Mammary epithelial cell (primary cell): ENCODE measurements at regions of chr1 and their contacts with region 1.

Region 1: DNA sequence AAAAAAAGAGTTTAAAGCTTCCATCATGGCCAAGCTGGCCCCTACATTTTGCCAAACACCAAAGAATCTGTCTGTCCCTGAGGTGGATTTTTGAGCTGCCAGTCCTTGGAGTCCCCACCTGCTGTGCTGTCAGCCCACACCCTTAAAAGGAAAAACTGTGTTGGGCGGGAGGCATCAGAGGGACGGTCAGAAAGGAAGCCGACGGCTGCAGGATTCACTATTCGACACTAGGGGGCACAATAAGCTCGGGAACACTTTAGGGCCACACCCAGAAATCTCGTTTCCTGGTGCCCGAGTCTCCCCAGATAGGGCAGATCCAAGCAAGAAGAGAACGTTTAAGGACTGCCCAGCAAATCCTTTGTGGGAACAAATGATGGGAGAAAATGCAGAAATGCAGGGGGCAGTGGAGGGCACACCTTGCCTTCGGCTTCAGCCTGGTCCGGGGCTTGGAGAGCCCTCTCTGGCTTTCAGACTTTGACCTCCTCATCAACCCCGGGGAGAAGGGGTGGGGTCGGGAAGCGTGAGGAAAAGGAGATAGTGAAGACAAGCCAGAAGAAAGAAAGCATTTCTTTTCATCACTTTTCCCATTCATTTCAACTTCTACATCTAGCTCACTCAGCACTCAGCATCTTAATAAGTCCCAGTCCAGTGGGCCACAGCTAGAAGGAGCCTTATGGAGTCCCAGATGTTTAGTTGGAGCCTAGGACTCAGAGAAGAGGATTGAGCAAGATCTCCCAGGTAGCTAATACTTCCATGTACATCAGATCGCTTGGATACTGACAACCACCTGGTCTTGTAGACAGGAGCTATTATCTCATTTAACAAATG is 5.0 kb upstream of the CTTNBP2NL start:
- DNase-seq: peak; percentile 88
- H3K4me3 ChIP-seq: peak overlapping the region; percentile 38 to 50 (median 41)
- H3K27ac ChIP-seq: peak overlapping the region; percentile 52
- H3K4me1 ChIP-seq: peaks cover 39% of the 10 kb centered on the region
- H3K27me3 ChIP-seq: no peaks in the 10 kb centered on the region
- CTCF ChIP-seq: peak; percentile 90 to 93

Region 2: DNA sequence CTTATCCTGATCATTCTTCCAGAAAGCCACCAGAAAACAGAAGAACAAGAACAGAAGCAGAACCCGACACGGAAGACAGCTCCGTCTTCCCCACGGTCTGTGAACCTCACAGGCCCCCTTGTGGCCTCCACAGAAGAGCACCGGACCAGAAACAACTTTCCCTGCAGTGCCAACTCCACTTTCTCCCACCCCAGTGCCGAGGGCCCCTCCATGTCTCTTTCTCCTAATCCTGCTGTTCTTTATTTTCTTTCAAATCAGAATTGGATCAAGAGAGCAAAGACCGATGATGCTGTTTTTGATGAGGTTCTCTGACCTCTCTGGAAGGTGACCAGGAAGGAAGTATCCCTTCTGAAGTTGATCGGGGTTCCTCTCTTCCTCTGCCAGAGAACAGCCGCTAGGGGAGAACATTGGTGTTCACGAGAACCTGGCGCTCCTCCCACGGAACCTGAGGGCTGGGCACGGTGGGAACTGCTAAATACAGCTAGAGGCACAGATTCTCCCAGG is 53.9 kb before region 1 on chr1:
- CTCF ChIA-PET with region 1: interaction called, 15 read pairs
- dilution Hi-C with region 1: no loop called
- in situ Hi-C with region 1: no loop called
- intact Hi-C with region 1: no loop called
- DNase-seq: peak; percentile 53
- H3K4me3 ChIP-seq: no peak overlapping the region
- H3K27ac ChIP-seq: no peak overlapping the region
- H3K4me1 ChIP-seq: peaks cover 44% of the 10 kb centered on the region
- H3K27me3 ChIP-seq: no peaks in the 10 kb centered on the region
- CTCF ChIP-seq: peak; percentile 51 to 86

Region 3: DNA sequence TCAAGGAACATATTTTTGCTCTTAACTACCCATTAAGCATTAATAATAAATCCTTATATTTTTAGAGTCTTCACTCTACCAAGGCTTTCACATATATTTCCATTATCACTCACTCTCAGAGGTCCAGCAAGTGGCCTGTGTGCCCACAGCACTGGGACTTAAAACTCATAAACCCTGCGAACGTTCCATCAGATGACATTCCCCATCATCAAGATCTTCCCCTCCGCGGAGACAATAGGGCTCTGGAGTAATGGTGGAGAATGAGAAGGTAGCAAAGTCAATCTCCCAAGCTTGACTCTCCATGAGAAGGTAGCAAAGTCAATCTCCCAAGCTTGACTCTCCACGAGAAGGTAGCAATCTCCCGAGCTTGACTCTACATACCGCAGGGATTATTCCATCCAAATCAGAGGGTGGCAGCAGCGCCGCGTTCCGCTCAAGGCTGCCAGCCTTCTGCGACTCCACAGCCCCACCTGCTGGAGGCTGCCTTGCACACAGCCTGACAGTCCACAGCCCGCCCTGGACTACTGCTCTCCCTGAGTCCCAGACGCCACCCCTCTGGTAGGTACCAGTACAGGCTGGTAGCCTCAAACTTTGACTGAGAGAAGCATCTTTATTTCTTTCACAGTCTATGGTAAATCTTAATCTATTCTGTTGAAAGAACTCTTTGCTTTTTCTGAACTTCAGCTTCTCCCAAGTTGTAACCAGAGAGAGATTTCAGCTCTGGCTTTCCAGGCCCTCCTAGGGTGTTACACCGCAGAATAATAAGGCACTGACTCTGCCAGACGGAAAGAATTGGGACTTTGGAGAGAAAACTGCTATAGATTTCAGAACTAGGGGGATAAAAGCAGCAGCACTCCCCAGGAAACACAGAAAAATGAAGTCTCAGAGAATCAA is 21.4 kb before region 1 on chr1:
- CTCF ChIA-PET with region 1: interaction called, 10 read pairs
- dilution Hi-C with region 1: no loop called
- in situ Hi-C with region 1: no loop called
- intact Hi-C with region 1: no loop called
- DNase-seq: peak; percentile 73
- H3K4me3 ChIP-seq: no peak overlapping the region
- H3K27ac ChIP-seq: no peak overlapping the region
- H3K4me1 ChIP-seq: no peaks in the 10 kb centered on the region
- H3K27me3 ChIP-seq: no peaks in the 10 kb centered on the region
- CTCF ChIP-seq: peak; percentile 97 to 99

Region 4: DNA sequence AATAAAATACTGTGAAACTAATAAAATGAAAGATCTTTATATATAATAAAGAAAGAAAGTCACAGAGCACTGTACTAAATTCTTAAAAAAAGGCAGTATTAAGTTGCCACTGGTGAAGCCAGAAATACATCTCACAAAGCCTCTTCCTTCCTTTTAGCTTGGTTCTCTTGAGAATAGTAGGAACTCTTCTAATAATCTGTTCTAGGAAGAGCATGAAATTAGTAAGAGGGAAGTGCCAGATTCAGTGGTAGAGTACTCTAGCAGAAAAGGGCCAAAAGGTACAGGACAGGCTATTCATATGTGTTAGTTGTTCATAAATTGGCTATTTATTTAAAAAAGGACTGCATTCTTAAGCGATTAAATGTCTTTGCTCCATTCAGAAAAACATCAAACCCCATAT is 38.8 kb after region 1 on chr1:
- CTCF ChIA-PET with region 1: no interaction called
- dilution Hi-C with region 1: no loop called
- in situ Hi-C with region 1: no loop called
- intact Hi-C with region 1: no loop called
- DNase-seq: no peak
- H3K4me3 ChIP-seq: no peak overlapping the region
- H3K27ac ChIP-seq: no peak overlapping the region
- H3K4me1 ChIP-seq: no peaks in the 10 kb centered on the region
- H3K27me3 ChIP-seq: no peaks in the 10 kb centered on the region
- CTCF ChIP-seq: no peak

Region 5: GRCh38 chr1:112501810-112502641 is 111.0 kb after region 1 on chr1:
- CTCF ChIA-PET with region 1: no interaction called
- dilution Hi-C with region 1: no loop called
- in situ Hi-C with region 1: no loop called
- intact Hi-C with region 1: loop called (anchors 2 kb)
- DNase-seq: peak; percentile 69
- H3K4me3 ChIP-seq: peak overlapping the region; percentile 54 to 57 (median 56)
- H3K27ac ChIP-seq: no peak overlapping the region
- H3K4me1 ChIP-seq: peaks cover 5% of the 10 kb centered on the region
- H3K27me3 ChIP-seq: no peaks in the 10 kb centered on the region
- CTCF ChIP-seq: peak; percentile 33 to 87

Region 6: DNA sequence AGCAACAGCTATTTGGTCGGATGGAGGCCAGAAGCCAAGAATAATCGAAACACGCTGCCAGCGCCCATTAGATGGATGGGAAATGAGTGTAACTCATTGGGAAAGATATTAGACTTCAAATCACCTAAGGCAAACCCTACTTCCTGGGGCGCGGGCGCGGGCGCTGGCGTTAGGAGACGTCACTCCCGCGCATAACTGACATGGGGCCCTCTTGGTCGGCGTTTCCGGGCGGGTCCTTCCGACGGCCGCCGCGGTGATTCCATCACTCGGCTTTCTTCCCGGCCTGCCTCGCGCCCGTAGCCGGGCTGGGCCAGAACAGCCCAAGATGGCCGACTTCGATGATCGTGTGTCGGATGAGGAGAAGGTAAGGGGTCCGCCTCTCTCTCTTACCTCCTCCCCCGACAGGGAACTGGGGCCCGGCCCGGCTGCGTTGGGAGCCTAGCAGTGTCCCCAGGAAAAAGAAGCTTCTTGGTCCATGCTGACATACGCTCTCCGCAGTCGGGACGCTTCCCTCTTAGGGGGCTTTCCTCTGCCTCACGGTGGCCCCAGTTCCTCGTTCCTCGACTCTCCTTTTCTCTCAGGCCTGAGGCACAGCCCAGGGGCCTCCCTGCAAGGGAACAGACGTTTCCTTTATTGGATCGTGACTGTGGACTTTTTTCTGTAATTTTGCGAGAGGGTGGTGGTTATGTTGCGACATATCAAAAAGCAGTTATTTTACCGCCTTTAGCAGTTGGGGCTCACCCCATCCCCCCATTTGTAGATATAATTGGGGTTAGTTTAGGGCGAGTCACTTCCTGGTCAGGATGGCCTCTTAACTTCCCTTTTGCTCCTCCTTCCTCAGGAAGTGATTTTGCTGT is 228.8 kb after region 1 on chr1 and contains the start of gene CAPZA1:
- CTCF ChIA-PET with region 1: interaction called, 13 read pairs
- dilution Hi-C with region 1: loop called (anchors 10 kb)
- in situ Hi-C with region 1: loop called (anchors 5 to 10 kb)
- intact Hi-C with region 1: loop called (anchors 1 kb)
- DNase-seq: peak; percentile 93
- H3K4me3 ChIP-seq: peak within 1 kb of the TSS; percentile 83 to 98 (median 85)
- H3K27ac ChIP-seq: peak within 1 kb of the TSS; percentile 96
- H3K4me1 ChIP-seq: peaks cover 19% of the 10 kb centered on the region
- H3K27me3 ChIP-seq: no peaks in the 10 kb centered on the region
- CTCF ChIP-seq: no peak
- total RNA-seq, gene CAPZA1: 188 to 192 TPM

Region 7: DNA sequence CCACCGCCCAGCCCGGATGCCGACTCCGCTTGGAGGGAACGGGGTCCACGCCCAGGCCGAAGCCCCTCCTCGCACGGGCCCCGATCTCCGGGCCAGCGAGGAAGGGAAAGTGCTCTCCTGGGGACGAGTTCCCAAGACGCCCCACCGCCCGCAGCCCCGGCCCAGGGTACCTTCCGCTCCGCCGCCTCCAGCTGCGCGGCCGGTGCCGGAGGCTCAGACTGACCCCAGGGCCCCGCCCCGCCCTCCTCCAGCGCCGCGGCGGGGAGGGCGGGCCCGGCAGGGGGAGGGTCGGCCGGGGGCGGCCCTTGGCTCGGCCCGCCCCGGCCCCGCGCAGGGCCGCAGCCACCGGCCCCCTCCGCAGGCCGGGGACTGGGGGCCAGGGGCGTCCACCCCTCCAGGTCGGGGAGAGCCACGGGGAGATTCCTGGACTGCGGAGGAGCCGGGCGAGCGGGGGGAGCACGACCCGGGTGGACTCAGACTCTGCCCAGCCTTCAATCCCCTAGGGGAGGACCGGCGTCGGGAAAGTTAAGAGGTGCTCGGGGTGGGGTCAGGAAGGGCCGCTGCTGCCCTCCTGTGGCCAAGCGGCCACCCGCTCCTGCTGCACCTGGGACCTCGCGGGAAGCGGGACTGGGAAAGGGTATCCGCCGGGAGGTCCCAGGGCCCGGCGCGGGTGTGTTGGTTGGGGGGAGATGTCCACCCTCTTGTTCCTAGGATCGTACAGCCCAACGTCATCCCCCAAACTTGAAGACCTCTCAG is 316.1 kb after region 1 on chr1 and contains the start of gene RHOC:
- CTCF ChIA-PET with region 1: no interaction called
- dilution Hi-C with region 1: no loop called
- in situ Hi-C with region 1: loop called (anchors 5 to 10 kb)
- intact Hi-C with region 1: loop called (anchors 1 kb)
- DNase-seq: peak; percentile 86
- H3K4me3 ChIP-seq: peak within 1 kb of the TSS; percentile 70 to 87 (median 80)
- H3K27ac ChIP-seq: peak within 1 kb of the TSS; percentile 85
- H3K4me1 ChIP-seq: peaks cover 44% of the 10 kb centered on the region
- H3K27me3 ChIP-seq: no peaks in the 10 kb centered on the region
- CTCF ChIP-seq: peak; percentile 73 to 98
- total RNA-seq, gene RHOC: 383 to 495 TPM

Region 8: DNA sequence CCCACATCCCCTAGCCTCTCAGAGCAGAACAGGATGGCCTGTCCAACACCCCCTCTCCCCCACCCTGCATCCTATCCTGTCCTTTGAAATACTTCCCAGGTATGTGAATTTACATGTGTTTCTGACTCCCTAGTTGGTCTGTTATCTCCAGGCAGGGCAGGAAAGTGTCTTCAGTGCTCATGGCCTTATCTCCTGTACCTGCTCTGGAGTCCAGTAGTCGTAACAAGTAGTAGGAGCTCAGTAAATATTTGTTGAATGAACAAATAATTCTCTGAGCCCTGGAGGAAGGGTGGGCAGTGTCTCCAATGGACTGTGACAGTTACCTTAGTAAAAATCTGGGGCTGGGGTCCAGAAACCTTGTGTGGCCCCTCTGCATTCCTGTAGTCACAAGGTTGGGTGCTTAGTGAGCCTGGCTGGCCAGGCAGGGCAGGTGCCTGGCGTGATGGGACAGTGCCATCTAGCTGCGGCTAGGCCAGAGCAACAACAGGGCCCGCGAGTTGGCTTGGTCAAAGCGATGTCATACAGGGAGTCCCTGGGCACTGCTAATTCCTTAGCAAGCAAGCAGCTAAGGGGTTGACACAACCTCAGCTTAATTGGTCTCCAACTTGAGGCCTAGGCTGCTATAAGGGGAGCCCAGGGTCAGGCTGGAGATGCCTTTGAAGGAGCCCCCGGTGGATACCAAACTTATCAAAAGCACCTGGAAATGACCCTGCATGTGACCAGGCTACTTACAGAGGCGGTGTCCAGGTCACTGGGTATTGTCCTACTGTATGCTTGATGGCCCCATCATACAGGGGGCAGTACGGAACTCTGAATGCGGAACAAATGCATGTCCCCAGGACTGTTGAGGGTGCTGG is 413.1 kb after region 1 on chr1:
- CTCF ChIA-PET with region 1: no interaction called
- dilution Hi-C with region 1: no loop called
- in situ Hi-C with region 1: no loop called
- intact Hi-C with region 1: loop called (anchors 1 kb)
- DNase-seq: peak; percentile 59
- H3K4me3 ChIP-seq: no peak overlapping the region
- H3K27ac ChIP-seq: no peak overlapping the region
- H3K4me1 ChIP-seq: peaks cover 5% of the 10 kb centered on the region
- H3K27me3 ChIP-seq: no peaks in the 10 kb centered on the region
- CTCF ChIP-seq: peak; percentile 87 to 98